Heart left ventricle (tissue), 16 donors: ENCODE measurements at regions of chr1 and their contacts with region 1.

Region 1: GRCh38 chr1:40449684-40450494 is at the start of gene ZFP69B:
- DNase-seq: peak; percentile 92 to 97 (median 95)
- ATAC-seq: peak; percentile 96 to 100 (median 100)
- H3K4me3 ChIP-seq: peak within 1 kb of the TSS; percentile 40 to 93 (median 78)
- H3K27ac ChIP-seq: peak within 1 kb of the TSS; percentile 12 to 94 (median 80)
- H3K4me1 ChIP-seq: peaks cover 0 to 16% (median 10%) of the 10 kb centered on the region in 12 donors
- H3K27me3 ChIP-seq: no peaks in the 10 kb centered on the region
- CTCF ChIP-seq: peak in 3 of 12 donors; percentile 13 to 40 (median 23)
- POLR2A ChIP-seq: peak in 1 of 2 donors; percentile 66
- total RNA-seq, gene ZFP69B: 0.44 to 2.6 (median 1.1) TPM

Region 2: GRCh38 chr1:40508375-40509341 is 58.8 kb after region 1 on chr1 and contains the start of gene EXO5:
- intact Hi-C with region 1: loop called in 1 of 10 experiments (anchors 5 kb)
- DNase-seq: peak; percentile 84 to 92 (median 88)
- ATAC-seq: peak; percentile 97 to 100 (median 100)
- H3K4me3 ChIP-seq: peak within 1 kb of the TSS; percentile 60 to 91 (median 78)
- H3K27ac ChIP-seq: peak within 1 kb of the TSS in 11 of 12 donors; percentile 32 to 85 (median 79)
- H3K4me1 ChIP-seq: peaks cover 0 to 16% (median 10%) of the 10 kb centered on the region in 12 donors
- H3K27me3 ChIP-seq: no peaks in the 10 kb centered on the region
- CTCF ChIP-seq: no peak
- POLR2A ChIP-seq: peak in 1 of 2 donors; percentile 59
- total RNA-seq, gene EXO5: 2.7 to 6.4 (median 5.1) TPM